GM10248 (cell line): ENCODE measurements at regions of chr7 and their contacts with region 1.

Region 1: GRCh38 chr7:100691676-100692577 is 2.1 kb downstream of the GIGYF1 start:
- DNase-seq: peak; percentile 87
- CTCF ChIP-seq: peak; percentile 97

Region 2: GRCh38 chr7:100595188-100595587 is 96.7 kb before region 1 on chr7:
- CTCF ChIA-PET with region 1: no interaction called
- POLR2A ChIA-PET with region 1: no interaction called
- DNase-seq: no peak
- CTCF ChIP-seq: no peak

Region 3: DNA sequence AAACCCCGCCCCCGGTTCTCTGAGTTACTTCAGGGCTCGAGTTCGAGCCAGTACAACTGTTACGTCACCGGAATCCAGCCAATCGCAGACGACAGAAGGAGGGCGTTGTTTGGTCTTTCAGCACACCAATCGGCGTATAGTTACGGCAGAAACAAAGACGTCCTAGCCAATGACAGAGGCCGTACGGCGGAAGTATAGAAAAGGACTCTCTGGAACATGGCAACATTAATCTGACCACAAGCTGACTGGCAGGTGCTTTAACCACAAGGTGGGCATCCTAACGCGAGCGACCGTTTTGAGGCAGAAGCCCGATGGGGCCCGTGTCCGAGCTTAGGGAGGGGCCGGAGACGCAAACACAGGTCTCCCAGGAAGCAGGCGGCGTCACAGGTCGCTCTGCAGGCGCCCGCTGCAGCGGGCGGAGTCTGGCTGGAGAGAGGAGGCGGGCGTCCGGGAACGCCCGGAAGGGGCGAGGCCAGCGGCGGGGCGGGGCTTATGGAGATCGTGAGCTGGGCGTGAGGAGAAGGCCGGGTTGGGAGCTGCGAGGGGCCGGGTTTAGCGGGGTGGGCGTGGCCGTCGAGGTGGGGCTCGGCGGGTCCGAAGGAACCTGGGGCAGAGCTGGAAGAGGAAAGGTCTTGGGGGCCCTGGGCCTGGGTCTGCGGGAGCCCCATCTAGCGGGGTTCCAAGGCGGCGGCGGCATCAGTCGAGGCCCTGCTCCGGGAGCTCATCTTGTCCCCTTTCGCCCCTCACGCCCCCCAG is 79.8 kb before region 1 on chr7 and contains the start of gene MOSPD3:
- CTCF ChIA-PET with region 1: interaction called, 12 read pairs
- POLR2A ChIA-PET with region 1: interaction called, 4 read pairs
- DNase-seq: peak; percentile 99
- CTCF ChIP-seq: no peak

Region 4: DNA sequence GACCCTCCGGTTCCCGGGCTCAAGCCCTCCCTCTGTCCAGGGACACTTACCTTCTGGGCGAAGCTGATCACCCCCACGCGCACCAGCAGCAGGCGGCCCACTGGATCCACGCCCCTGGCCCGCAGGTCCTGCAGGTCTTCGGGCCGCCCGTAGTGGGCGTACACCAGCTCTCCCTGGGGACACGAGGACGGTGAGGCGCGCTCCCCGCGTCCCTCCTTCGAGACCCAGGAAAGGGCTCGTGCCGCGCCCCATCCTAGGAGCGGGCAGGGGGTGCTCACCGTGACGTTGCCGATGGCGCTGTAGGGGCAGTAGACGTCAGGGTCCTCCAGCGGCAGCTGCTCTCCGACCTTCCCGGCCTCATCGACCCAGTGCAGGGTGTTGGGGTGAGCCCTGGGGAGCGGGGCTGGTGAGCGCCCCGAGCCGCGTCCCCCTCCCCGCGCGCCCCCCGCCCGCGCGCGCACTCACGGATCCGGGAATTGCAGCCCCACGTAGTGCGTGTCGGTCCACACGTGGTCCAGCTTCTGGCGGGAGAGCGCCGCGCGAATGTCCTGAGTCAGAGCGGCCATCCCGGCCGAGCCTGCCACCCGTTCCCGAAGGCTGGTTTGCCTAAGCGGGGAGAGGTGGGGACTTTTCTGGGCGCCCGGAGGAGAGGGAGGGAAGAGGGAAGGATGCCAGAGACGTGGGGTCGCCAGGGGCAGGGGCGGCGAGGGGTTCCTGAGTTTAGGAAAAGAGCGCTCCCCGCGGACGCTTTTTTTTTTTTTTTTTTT is 58.8 kb before region 1 on chr7:
- CTCF ChIA-PET with region 1: interaction called, 12 read pairs
- POLR2A ChIA-PET with region 1: no interaction called
- DNase-seq: peak; percentile 79
- CTCF ChIP-seq: peak; percentile 30

Region 5: GRCh38 chr7:100675581-100676350 is 16.2 kb before region 1 on chr7:
- CTCF ChIA-PET with region 1: interaction called, 106 read pairs
- POLR2A ChIA-PET with region 1: no interaction called
- DNase-seq: peak; percentile 83
- CTCF ChIP-seq: no peak